Mammary epithelial cell (primary cell): ENCODE measurements at regions of chr9 and their contacts with region 1.

Region 1: DNA sequence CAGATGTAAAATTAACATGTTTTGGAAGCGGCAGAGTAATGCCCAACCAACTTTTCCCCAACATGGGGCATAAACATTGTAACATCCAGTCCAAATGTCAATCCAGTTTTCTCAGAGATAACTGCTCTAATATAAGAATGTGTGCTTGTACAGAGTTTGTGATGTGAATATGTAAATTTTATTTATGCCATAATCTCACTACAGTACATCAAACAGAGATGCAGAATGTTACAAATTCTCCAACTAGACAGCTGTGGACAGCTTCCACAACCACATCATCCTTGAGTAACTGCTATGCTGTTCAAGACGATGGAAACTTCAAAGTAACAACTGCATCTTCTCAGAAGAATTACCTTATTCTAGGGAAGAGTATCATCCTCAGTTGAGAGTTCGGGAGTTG is 109.9 kb downstream of the GLDC start:
- DNase-seq: no peak
- H3K4me3 ChIP-seq: no peak overlapping the region
- H3K27ac ChIP-seq: no peak overlapping the region
- H3K4me1 ChIP-seq: peaks cover 11% of the 10 kb centered on the region
- H3K27me3 ChIP-seq: no peaks in the 10 kb centered on the region
- CTCF ChIP-seq: no peak

Region 2: GRCh38 chr9:6197330-6197729 is 338.3 kb before region 1 on chr9:
- CTCF ChIA-PET with region 1: interaction called, 10 read pairs
- dilution Hi-C with region 1: no loop called
- in situ Hi-C with region 1: no loop called
- intact Hi-C with region 1: no loop called
- DNase-seq: peak; percentile 24
- H3K4me3 ChIP-seq: no peak overlapping the region
- H3K27ac ChIP-seq: no peak overlapping the region
- H3K4me1 ChIP-seq: peaks cover 8% of the 10 kb centered on the region
- H3K27me3 ChIP-seq: no peaks in the 10 kb centered on the region
- CTCF ChIP-seq: peak; percentile 36 to 54